B cell (primary cell): ENCODE measurements at regions of chr1 and their contacts with region 1.

Region 1: GRCh38 chr1:23772049-23772853 is 6.0 kb upstream of the PITHD1 start:
- DNase-seq: peak; percentile 86
- ATAC-seq: peak; percentile 100
- H3K4me3 ChIP-seq: no peak overlapping the region
- H3K4me3 Mint-ChIP-seq: no peak overlapping the region
- H3K27ac ChIP-seq: no peak overlapping the region
- H3K27ac Mint-ChIP-seq: no peak overlapping the region
- H3K4me1 ChIP-seq: peaks cover 4 to 5% of the 10 kb centered on the region in 2 donors
- H3K4me1 Mint-ChIP-seq: peaks cover 9% of the 10 kb centered on the region
- H3K27me3 ChIP-seq: no peaks in the 10 kb centered on the region
- H3K27me3 Mint-ChIP-seq: no peaks in the 10 kb centered on the region
- CTCF ChIP-seq: peak; percentile 92

Region 2: GRCh38 chr1:23459338-23459757 is 312.9 kb before region 1 on chr1:
- CTCF ChIA-PET with region 1: no interaction called
- POLR2A ChIA-PET with region 1: no interaction called
- intact Hi-C with region 1: no loop called
- DNase-seq: no peak
- ATAC-seq: no peak
- H3K4me3 ChIP-seq: no peak overlapping the region
- H3K4me3 Mint-ChIP-seq: no peak overlapping the region
- H3K27ac ChIP-seq: no peak overlapping the region
- H3K27ac Mint-ChIP-seq: no peak overlapping the region
- H3K4me1 ChIP-seq: no peaks in the 10 kb centered on the region
- H3K4me1 Mint-ChIP-seq: no peaks in the 10 kb centered on the region
- H3K27me3 ChIP-seq: peaks cover 0 to 4% (median 0%) of the 10 kb centered on the region in 4 experiments
- H3K27me3 Mint-ChIP-seq: peaks cover 33% of the 10 kb centered on the region
- CTCF ChIP-seq: no peak

Region 3: GRCh38 chr1:23790696-23791515 is 18.7 kb after region 1 on chr1 and contains the start of gene LYPLA2:
- CTCF ChIA-PET with region 1: interaction called, 10 read pairs
- POLR2A ChIA-PET with region 1: interaction called, 6 read pairs
- intact Hi-C with region 1: no loop called
- DNase-seq: peak; percentile 89
- ATAC-seq: peak; percentile 91
- H3K4me3 ChIP-seq: peak within 1 kb of the TSS; percentile 70 to 94 (median 88)
- H3K4me3 Mint-ChIP-seq: peak within 1 kb of the TSS; percentile 98
- H3K27ac ChIP-seq: peak within 1 kb of the TSS; percentile 69 to 81
- H3K27ac Mint-ChIP-seq: peak within 1 kb of the TSS; percentile 97
- H3K4me1 ChIP-seq: peaks cover 11 to 21% of the 10 kb centered on the region in 2 donors
- H3K4me1 Mint-ChIP-seq: peaks cover 21% of the 10 kb centered on the region
- H3K27me3 ChIP-seq: no peaks in the 10 kb centered on the region
- H3K27me3 Mint-ChIP-seq: no peaks in the 10 kb centered on the region
- CTCF ChIP-seq: no peak
- total RNA-seq, gene LYPLA2: 50.6 and 52.2 TPM in 2 replicates

Region 4: GRCh38 chr1:23816906-23817305 is 44.7 kb after region 1 on chr1:
- CTCF ChIA-PET with region 1: interaction called, 12 read pairs
- POLR2A ChIA-PET with region 1: no interaction called
- intact Hi-C with region 1: loop called (anchors 5 kb)
- DNase-seq: no peak
- ATAC-seq: no peak
- H3K4me3 ChIP-seq: no peak overlapping the region
- H3K4me3 Mint-ChIP-seq: no peak overlapping the region
- H3K27ac ChIP-seq: no peak overlapping the region
- H3K27ac Mint-ChIP-seq: no peak overlapping the region
- H3K4me1 ChIP-seq: no peaks in the 10 kb centered on the region
- H3K4me1 Mint-ChIP-seq: peaks cover 2% of the 10 kb centered on the region
- H3K27me3 ChIP-seq: no peaks in the 10 kb centered on the region
- H3K27me3 Mint-ChIP-seq: no peaks in the 10 kb centered on the region
- CTCF ChIP-seq: no peak

Region 5: DNA sequence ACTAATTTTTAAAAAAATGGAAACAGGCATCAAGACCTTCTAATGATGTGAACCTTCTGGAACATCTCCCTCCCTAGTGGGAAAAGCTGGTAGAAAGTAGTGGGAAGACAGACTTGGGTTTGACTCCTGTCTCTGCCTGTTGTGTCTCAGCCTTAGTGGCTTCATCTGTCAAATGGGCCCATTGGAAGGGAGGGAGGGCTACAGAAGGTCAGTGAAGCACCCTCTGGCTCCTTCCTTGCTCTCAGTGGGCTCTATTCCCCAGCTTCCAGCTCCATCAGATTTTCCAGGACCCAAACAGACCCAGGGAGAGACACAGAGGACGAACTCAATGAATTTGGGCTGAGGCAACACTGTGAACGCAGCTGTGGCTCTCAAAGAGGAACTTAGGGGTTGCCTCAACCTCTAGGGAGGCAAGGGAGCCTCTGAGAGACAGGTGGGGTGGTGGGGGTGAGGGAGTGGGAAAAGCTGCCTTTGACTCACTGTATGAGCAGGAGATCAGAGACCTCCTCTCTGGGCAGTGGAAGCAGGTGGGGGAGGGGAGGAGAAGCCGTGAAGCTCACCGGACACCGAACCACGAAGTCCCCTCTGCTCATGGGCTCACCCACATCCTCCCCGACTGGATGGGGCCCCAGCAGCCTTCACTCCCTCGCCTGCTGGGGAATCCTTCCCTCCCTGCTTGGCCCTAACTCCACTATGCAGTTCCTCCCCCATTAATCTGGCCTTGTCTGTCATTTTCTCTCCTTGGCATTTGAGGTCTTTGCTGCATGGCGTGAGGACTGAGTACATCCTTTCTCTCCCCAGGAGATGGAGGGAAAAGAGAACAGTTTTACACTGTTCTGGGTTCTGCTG is 136.5 kb after region 1 on chr1:
- CTCF ChIA-PET with region 1: interaction called, 22 read pairs
- POLR2A ChIA-PET with region 1: interaction called, 6 read pairs
- intact Hi-C with region 1: no loop called
- DNase-seq: peak; percentile 80
- ATAC-seq: peak; percentile 58
- H3K4me3 ChIP-seq: peak overlapping the region; percentile 53 to 94 (median 77)
- H3K4me3 Mint-ChIP-seq: peak overlapping the region; percentile 99
- H3K27ac ChIP-seq: peak overlapping the region; percentile 83 to 93
- H3K27ac Mint-ChIP-seq: peak overlapping the region; percentile 99
- H3K4me1 ChIP-seq: peaks cover 77 to 91% of the 10 kb centered on the region in 2 donors
- H3K4me1 Mint-ChIP-seq: peaks cover 86% of the 10 kb centered on the region
- H3K27me3 ChIP-seq: no peaks in the 10 kb centered on the region
- H3K27me3 Mint-ChIP-seq: no peaks in the 10 kb centered on the region
- CTCF ChIP-seq: no peak

Region 6: DNA sequence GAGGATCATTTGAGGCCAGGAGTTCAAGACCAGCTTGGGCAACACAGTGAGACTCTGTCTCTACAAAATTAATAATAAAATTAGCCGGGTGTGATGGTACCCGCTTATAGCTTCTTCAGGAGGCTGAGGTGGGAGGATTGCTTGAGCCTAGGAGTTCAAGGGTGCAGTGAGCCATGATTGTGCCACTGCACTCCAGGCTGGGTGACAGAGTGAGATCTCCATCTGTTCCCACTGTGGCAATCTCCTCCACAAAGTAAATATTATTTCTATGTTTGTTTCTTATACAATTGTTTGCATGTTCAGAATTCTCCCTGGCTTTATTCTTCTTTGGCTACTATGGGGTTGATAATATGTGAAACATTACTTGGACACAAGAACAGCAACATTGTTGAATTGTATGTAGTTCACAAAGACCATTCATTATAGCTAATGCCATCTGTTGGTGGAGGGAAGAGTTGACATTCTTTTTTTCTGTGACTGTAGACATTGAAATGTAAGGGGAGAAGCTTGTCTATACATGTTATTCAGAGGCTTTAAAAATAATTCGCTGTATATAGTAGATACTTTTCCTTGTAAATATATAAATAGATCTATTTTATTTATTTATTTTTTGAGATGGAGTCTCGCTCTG is 255.7 kb after region 1 on chr1:
- CTCF ChIA-PET with region 1: interaction called, 17 read pairs
- POLR2A ChIA-PET with region 1: no interaction called
- intact Hi-C with region 1: no loop called
- DNase-seq: peak; percentile 37
- ATAC-seq: no peak
- H3K4me3 ChIP-seq: no peak overlapping the region
- H3K4me3 Mint-ChIP-seq: no peak overlapping the region
- H3K27ac ChIP-seq: no peak overlapping the region
- H3K27ac Mint-ChIP-seq: no peak overlapping the region
- H3K4me1 ChIP-seq: no peaks in the 10 kb centered on the region
- H3K4me1 Mint-ChIP-seq: peaks cover 5% of the 10 kb centered on the region
- H3K27me3 ChIP-seq: no peaks in the 10 kb centered on the region
- H3K27me3 Mint-ChIP-seq: no peaks in the 10 kb centered on the region
- CTCF ChIP-seq: peak; percentile 50

Region 7: DNA sequence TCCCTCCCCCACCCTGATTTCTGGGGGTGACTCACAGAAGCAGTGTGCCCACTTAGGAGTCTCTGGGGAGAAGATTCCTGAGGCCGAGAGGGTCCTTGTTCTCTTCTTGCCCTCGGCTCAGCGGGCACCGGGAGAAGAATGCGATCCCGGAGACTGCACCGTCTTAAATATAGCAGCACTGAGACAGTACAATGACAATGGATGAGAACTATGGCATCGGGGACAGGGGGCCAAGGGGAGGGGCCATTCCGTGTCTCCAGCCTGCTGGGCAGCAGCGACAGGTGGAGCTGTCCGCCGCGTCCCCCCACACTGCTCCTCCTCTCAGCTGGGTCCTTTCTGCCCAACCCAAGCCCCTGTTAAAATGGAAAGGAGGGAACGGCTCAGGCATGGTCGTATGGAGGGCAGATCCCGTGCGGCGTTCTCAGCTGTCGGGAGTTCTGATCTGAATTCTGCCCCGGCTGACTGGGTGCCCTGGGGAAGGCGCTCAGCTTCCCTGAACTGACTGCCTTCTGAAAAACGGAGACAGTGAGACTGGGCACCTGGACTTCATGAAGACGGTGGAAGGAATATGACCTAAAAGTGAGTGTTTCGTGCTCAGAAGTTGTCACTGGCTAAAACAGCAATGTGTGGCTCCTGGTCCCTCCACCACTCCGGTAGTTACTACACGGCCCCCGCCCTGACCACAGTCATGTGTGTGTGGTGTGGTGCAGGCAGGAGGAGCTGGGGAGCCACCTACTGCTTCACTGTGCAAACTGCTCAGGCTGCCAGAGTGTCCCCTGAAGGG is 339.9 kb after region 1 on chr1 and contains the start of gene MYOM3:
- CTCF ChIA-PET with region 1: no interaction called
- POLR2A ChIA-PET with region 1: no interaction called
- intact Hi-C with region 1: loop called (anchors 2 kb)
- DNase-seq: peak; percentile 50
- ATAC-seq: peak; percentile 68
- H3K4me3 ChIP-seq: peak within 1 kb of the TSS in 1 of 5 experiments; percentile 9
- H3K4me3 Mint-ChIP-seq: peak within 1 kb of the TSS; percentile 19
- H3K27ac ChIP-seq: no peak within 1 kb of the TSS
- H3K27ac Mint-ChIP-seq: no peak within 1 kb of the TSS
- H3K4me1 ChIP-seq: peaks cover 5 to 8% of the 10 kb centered on the region in 2 donors
- H3K4me1 Mint-ChIP-seq: peaks cover 8% of the 10 kb centered on the region
- H3K27me3 ChIP-seq: peaks cover 0 to 28% (median 2%) of the 10 kb centered on the region in 4 experiments
- H3K27me3 Mint-ChIP-seq: peaks cover 25% of the 10 kb centered on the region
- CTCF ChIP-seq: no peak
- total RNA-seq, gene MYOM3: not detected in 2 replicates